ENCODE measurements at regions of chrX and their contacts with region 1.

Region 1: DNA sequence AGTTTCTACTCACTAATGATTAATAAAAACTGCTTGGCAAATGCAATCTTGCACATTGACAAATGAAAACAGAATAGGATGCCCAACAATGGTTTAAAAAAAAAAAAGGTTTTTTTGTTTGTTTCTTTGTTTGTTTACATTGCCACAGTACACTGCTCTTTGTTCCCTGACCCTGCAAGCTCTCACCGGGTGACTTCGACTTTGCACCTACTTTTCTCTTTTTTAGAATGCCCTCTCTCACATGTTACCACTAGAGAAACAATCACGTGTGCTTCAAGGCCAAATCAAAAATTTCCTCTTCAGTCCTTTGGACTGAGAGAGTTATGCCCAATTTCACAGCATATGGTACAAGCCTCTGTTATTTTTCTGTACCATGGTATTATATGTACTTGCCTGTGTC is 101.5 kb downstream of the DMD start:
- DNase-seq: no peak
- H3K4me3 ChIP-seq: no peak overlapping the region
- H3K27ac ChIP-seq: no peak overlapping the region
- H3K4me1 ChIP-seq: no peaks in the 10 kb centered on the region
- H3K27me3 ChIP-seq: no peaks in the 10 kb centered on the region
- CTCF ChIP-seq: no peak

Region 2: DNA sequence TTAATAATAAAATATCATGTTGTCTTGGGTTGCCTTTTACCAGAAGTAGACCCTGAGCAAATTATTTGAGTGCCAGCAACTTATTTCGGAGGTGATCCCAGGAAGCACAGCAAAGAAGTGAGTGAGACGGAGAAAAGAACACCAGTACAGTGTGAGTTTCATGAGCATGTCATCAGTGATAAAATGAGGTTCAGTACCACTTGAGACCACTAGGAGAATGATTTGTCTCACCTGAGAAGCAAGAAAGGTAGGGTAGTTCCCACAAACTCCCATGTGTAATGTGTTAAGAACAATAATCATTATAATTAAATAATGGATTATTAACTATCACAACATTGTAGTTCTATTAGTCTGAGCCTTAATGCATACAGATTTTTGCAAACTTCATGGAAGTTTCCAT is 214.2 kb after region 1 on chrX:
- intact Hi-C with region 1: loop called (anchors 10 kb)
- DNase-seq: no peak
- H3K4me3 ChIP-seq: no peak overlapping the region
- H3K27ac ChIP-seq: no peak overlapping the region
- H3K4me1 ChIP-seq: no peaks in the 10 kb centered on the region
- H3K27me3 ChIP-seq: no peaks in the 10 kb centered on the region
- CTCF ChIP-seq: no peak

Measured in ascending aorta (tissue), 2 donors.